ENCODE measurements at regions of chr6 and their contacts with region 1.

Region 1: GRCh38 chr6:108558372-108559096 is 2.2 kb upstream of the FOXO3 start:
- DNase-seq: peak; percentile 98
- ATAC-seq: peak; percentile 71 to 85 (median 80)
- H3K4me3 ChIP-seq: peak overlapping the region; percentile 70 to 97 (median 93)
- H3K27ac ChIP-seq: peak overlapping the region; percentile 96 to 100 (median 99)
- H3K4me1 ChIP-seq: peaks cover 0 to 47% (median 32%) of the 10 kb centered on the region in 9 donors
- H3K27me3 ChIP-seq: no peaks in the 10 kb centered on the region
- CTCF ChIP-seq: no peak

Region 2: DNA sequence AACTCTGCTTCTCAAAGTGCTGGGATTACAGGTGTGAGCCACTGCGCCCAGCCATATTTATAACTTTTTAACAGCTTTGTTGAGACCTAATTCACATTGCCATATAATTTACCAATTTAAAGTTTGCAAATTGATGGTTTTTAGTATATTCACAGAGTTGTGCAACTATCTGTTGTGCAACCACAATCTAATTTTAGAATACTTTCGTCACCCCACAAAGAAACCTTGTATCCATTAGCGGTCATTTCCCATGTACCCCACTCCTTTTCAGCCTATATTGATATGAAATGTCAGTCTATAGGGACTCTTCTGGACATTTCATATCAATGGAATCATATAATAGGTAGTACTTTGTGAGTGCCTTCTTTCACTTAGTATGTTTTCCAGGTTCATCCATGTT is 58.0 kb after region 1 on chr6:
- intact Hi-C with region 1: loop called in 2 of 10 experiments (anchors 10 kb)
- DNase-seq: no peak
- ATAC-seq: no peak
- H3K4me3 ChIP-seq: no peak overlapping the region
- H3K27ac ChIP-seq: peak overlapping the region in 1 of 10 donors; percentile 6
- H3K4me1 ChIP-seq: peaks cover 17 to 92% (median 80%) of the 10 kb centered on the region in 9 donors
- H3K27me3 ChIP-seq: no peaks in the 10 kb centered on the region
- CTCF ChIP-seq: no peak

Region 3: GRCh38 chr6:108673602-108674001 is 115.1 kb after region 1 on chr6:
- intact Hi-C with region 1: loop called in 1 of 10 experiments (anchors 10 kb)
- DNase-seq: no peak
- ATAC-seq: peak in 2 of 8 donors; percentile 39 to 60
- H3K4me3 ChIP-seq: no peak overlapping the region
- H3K27ac ChIP-seq: peak overlapping the region in 1 of 10 donors; percentile 12
- H3K4me1 ChIP-seq: peaks cover 35 to 100% (median 92%) of the 10 kb centered on the region in 9 donors
- H3K27me3 ChIP-seq: no peaks in the 10 kb centered on the region
- CTCF ChIP-seq: no peak

Region 4: DNA sequence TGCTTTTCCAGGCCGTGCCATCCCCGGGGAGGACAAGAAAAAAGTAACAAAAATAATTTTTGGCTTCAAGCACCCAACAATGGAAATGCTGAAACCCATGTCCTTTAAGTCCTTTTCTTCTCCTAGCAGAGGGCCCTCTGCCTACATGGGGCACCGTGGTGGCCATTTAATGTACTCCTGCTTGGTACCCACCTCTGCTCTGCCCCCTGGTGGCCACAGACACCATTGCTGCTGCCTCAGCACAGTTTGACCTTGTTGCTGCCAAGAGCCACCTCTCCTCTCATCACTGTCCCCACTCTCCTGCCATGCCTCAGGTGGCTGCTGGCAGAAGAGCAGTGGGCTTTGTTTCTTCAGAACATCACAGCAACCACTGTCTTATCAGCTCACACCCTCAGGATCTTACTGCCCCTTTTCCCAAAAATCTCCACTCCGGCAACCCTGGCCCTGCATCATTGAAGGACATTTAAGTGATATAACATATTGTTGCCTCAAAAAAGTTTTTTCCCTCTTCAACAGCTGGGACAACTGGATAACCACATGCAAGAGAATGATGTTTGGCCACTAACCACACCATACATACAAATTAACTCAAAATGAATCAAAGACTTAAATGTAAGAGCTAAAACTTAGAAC is 276.8 kb after region 1 on chr6:
- intact Hi-C with region 1: loop called in 5 of 10 experiments (anchors 5 kb)
- DNase-seq: peak; percentile 88 to 89
- ATAC-seq: peak; percentile 89 to 96 (median 94)
- H3K4me3 ChIP-seq: no peak overlapping the region
- H3K27ac ChIP-seq: peak overlapping the region in 3 of 10 donors; percentile 8 to 39 (median 22)
- H3K4me1 ChIP-seq: peaks cover 0 to 32% (median 0%) of the 10 kb centered on the region in 9 donors
- H3K27me3 ChIP-seq: no peaks in the 10 kb centered on the region
- CTCF ChIP-seq: peak; percentile 85 to 97 (median 95)

Region 5: GRCh38 chr6:109095027-109095834 is 536.7 kb after region 1 on chr6 and contains the start of gene CEP57L1:
- intact Hi-C with region 1: loop called in 1 of 10 experiments (anchors 5 kb)
- DNase-seq: peak; percentile 98
- ATAC-seq: peak; percentile 71 to 94 (median 83)
- H3K4me3 ChIP-seq: peak within 1 kb of the TSS; percentile 59 to 98 (median 73)
- H3K27ac ChIP-seq: peak within 1 kb of the TSS; percentile 91 to 100 (median 99)
- H3K4me1 ChIP-seq: peaks cover 0 to 49% (median 38%) of the 10 kb centered on the region in 9 donors
- H3K27me3 ChIP-seq: no peaks in the 10 kb centered on the region
- CTCF ChIP-seq: peak in 2 of 9 donors; percentile 18 to 22
- total RNA-seq, gene CEP57L1: 6.0 to 11.4 (median 9.6) TPM